BJ (cell line): ENCODE measurements at regions of chr5 and their contacts with region 1.

Region 1: DNA sequence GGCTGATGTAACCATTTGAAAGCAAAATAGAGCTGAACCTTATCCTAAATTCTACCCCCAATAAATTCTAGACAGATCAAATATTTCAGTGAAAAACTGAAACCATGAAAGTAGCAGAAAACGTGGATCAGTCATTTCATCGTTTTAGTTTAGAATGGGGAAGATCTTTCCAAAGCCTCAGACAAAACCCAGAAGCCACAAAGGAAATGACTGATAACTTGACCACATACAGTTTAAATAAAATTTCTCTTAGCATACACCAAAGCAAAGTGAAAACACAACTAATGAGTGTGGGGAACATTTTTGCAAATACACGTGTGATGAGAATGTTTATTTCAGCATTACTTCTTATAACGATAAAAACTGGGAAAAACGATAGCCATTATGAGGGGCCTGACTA is 284.8 kb downstream of the ADGRV1 start:
- DNase-seq: no peak
- H3K4me3 ChIP-seq: no peak overlapping the region
- H3K27me3 ChIP-seq: no peaks in the 10 kb centered on the region; the same call in 1 of the 2 replicates
- CTCF ChIP-seq: no peak

Region 2: DNA sequence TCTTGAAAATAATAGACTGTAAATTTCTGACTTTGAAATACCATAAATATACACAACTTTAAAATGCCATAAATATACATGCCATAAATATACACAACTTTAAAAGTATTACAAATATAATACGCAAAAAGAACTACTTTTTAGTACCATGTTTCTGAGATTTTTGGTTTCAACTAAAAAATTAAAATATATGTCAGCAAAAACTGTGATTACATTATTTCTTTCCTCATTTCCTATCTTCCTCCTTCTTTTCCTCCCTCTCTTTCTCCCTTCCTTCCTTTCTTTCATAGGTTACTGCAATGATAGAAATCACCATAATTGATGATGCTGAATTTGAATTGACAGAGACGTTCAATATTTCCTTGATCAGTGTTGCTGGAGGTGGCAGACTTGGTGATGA is 84.3 kb before region 1 on chr5:
- CTCF ChIA-PET with region 1: no interaction called
- POLR2A ChIA-PET with region 1: interaction called, 16 read pairs
- DNase-seq: no peak
- H3K4me3 ChIP-seq: no peak overlapping the region
- H3K27me3 ChIP-seq: no peaks in the 10 kb centered on the region
- CTCF ChIP-seq: no peak

Region 3: GRCh38 chr5:90813392-90813791 is 30.1 kb before region 1 on chr5:
- CTCF ChIA-PET with region 1: no interaction called
- POLR2A ChIA-PET with region 1: no interaction called
- DNase-seq: no peak
- H3K4me3 ChIP-seq: no peak overlapping the region
- H3K27me3 ChIP-seq: no peaks in the 10 kb centered on the region
- CTCF ChIP-seq: no peak